ENCODE measurements at regions of chrX and their contacts with region 1.

Region 1: GRCh38 chrX:10189317-10190268 is 32.8 kb downstream of the CLCN4 start:
- DNase-seq: peak; percentile 71
- ATAC-seq: peak; percentile 84
- H3K4me3 Mint-ChIP-seq: no peak overlapping the region
- H3K27ac Mint-ChIP-seq: no peak overlapping the region
- H3K4me1 Mint-ChIP-seq: no peaks in the 10 kb centered on the region
- H3K27me3 Mint-ChIP-seq: no peaks in the 10 kb centered on the region
- CTCF ChIP-seq: peak; percentile 68

Region 2: GRCh38 chrX:10173316-10173900 is 16.2 kb before region 1 on chrX:
- CTCF ChIA-PET with region 1: interaction called, 12 read pairs
- POLR2A ChIA-PET with region 1: no interaction called
- intact Hi-C with region 1: no loop called
- DNase-seq: no peak
- ATAC-seq: no peak
- H3K4me3 Mint-ChIP-seq: no peak overlapping the region
- H3K27ac Mint-ChIP-seq: no peak overlapping the region
- H3K4me1 Mint-ChIP-seq: peaks cover 4% of the 10 kb centered on the region
- H3K27me3 Mint-ChIP-seq: peaks cover 12% of the 10 kb centered on the region
- CTCF ChIP-seq: no peak

Region 3: GRCh38 chrX:10203617-10204016 is 14.0 kb after region 1 on chrX:
- CTCF ChIA-PET with region 1: interaction called, 25 read pairs
- POLR2A ChIA-PET with region 1: no interaction called
- intact Hi-C with region 1: no loop called
- DNase-seq: no peak
- ATAC-seq: no peak
- H3K4me3 Mint-ChIP-seq: no peak overlapping the region
- H3K27ac Mint-ChIP-seq: no peak overlapping the region
- H3K4me1 Mint-ChIP-seq: peaks cover 4% of the 10 kb centered on the region
- H3K27me3 Mint-ChIP-seq: peaks cover 3% of the 10 kb centered on the region
- CTCF ChIP-seq: no peak

Region 4: DNA sequence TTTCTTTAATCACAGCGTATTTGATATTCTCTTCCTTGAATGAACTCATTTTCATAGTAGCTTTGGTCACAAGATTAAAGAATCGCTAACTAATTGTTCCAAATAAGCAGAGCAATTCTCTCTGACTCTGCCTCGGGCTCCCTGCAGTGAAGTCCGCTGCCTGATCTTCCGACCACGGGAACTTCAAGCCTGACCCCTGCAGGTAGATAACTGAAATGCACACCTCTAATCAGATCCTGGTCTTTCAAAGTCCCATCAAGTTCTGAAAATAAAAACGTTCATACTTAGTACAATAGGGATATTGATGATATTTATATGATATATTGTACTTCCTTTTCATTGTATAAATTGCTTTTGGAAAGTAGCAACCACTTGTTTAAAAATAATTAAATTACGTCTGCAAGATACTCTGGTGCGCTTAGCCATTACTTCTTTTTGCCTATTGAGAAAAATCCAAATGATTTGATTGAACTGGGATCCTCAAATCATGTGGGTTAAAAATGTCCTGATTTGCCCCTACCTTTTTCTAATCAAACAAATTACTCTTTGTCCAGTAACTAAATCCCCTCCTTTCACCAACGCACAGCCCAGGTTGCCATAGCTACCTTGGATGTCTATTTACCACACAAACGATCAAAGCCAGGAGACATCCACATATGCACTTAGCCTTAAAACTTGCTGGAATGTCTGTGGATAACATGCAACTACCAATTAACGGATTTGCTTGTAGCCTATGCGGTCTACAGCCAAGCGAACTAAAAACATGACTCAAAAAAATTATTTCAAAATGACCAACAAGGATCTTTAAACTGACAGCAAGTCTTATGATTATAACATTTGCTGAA is 426.6 kb after region 1 on chrX:
- CTCF ChIA-PET with region 1: interaction called, 16 read pairs
- POLR2A ChIA-PET with region 1: no interaction called
- intact Hi-C with region 1: loop called (anchors 5 kb)
- DNase-seq: peak; percentile 13
- ATAC-seq: peak; percentile 55
- H3K4me3 Mint-ChIP-seq: no peak overlapping the region
- H3K27ac Mint-ChIP-seq: no peak overlapping the region
- H3K4me1 Mint-ChIP-seq: peaks cover 7% of the 10 kb centered on the region
- H3K27me3 Mint-ChIP-seq: peaks cover 27% of the 10 kb centered on the region
- CTCF ChIP-seq: peak; percentile 30

Region 5: GRCh38 chrX:10722851-10723250 is 533.3 kb after region 1 on chrX:
- CTCF ChIA-PET with region 1: interaction called, 58 read pairs
- POLR2A ChIA-PET with region 1: no interaction called
- intact Hi-C with region 1: loop called (anchors 2 kb)
- DNase-seq: peak; percentile 45
- ATAC-seq: no peak
- H3K4me3 Mint-ChIP-seq: no peak overlapping the region
- H3K27ac Mint-ChIP-seq: no peak overlapping the region
- H3K4me1 Mint-ChIP-seq: no peaks in the 10 kb centered on the region
- H3K27me3 Mint-ChIP-seq: no peaks in the 10 kb centered on the region
- CTCF ChIP-seq: peak; percentile 50

Region 6: GRCh38 chrX:11137543-11138139 is 948.0 kb after region 1 on chrX:
- CTCF ChIA-PET with region 1: interaction called, 9 read pairs
- POLR2A ChIA-PET with region 1: no interaction called
- intact Hi-C with region 1: loop called (anchors 10 kb)
- DNase-seq: no peak
- ATAC-seq: no peak
- H3K4me3 Mint-ChIP-seq: no peak overlapping the region
- H3K27ac Mint-ChIP-seq: no peak overlapping the region
- H3K4me1 Mint-ChIP-seq: no peaks in the 10 kb centered on the region
- H3K27me3 Mint-ChIP-seq: no peaks in the 10 kb centered on the region
- CTCF ChIP-seq: peak; percentile 60

Measured in activated CD8-positive, alpha-beta T cell treated with anti-CD3 and anti-CD28 coated beads for 36 hours (primary cell).